ENCODE measurements at regions of chr11 and their contacts with region 1.

Region 1: GRCh38 chr11:1870721-1871466 is 18.0 kb downstream of the LSP1 start:
- DNase-seq: peak; percentile 61
- H3K4me3 Mint-ChIP-seq: no peak overlapping the region
- H3K27ac Mint-ChIP-seq: no peak overlapping the region
- H3K4me1 Mint-ChIP-seq: peaks cover 46% of the 10 kb centered on the region
- H3K27me3 Mint-ChIP-seq: no peaks in the 10 kb centered on the region

Region 2: GRCh38 chr11:1882519-1883238 is 11.8 kb after region 1 on chr11:
- CTCF ChIA-PET with region 1: interaction called, 15 read pairs
- POLR2A ChIA-PET with region 1: no interaction called
- DNase-seq: peak; percentile 75
- H3K4me3 Mint-ChIP-seq: no peak overlapping the region
- H3K27ac Mint-ChIP-seq: no peak overlapping the region
- H3K4me1 Mint-ChIP-seq: peaks cover 12% of the 10 kb centered on the region
- H3K27me3 Mint-ChIP-seq: no peaks in the 10 kb centered on the region

Measured in activated CD4-positive, alpha-beta memory T cell treated with anti-CD3 and anti-CD28 coated beads, Interleukin-2, amount 10 ng/mL, durations not matched to agents 7 days and 5 days (primary cell).